ENCODE measurements at regions of chr1 and their contacts with region 1.

Region 1: DNA sequence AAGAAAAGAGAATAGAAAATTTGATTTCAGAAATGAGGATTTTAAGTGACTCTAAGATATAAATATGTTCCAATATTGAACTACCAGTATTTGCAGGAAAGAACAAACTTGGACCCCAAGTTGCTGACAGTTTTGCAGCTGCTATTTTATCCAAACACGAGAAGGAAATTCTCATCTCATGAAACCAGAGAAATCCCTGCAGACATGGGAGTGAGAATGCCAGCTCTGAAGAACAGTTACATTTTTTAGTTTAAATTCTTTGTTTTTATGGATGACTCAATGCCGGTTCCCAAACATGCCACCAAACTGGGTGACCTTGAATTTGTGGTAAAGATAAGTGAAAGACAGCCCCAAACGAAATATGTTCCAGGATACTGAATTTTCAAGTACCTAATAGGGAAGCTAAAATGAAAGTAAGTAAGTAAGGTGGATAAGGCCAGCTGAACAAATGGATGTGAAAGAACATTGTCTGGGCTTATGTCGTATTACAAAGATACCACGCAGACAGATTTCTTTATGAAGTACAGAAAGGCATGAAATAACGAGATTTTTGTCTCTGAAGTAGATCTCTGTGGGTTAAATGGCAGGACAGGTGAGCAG is 19.9 kb downstream of the TLR5 start:
- DNase-seq: no peak
- H3K4me3 Mint-ChIP-seq: peak overlapping the region; percentile 29
- H3K27ac Mint-ChIP-seq: no peak overlapping the region
- H3K4me1 Mint-ChIP-seq: peaks cover 10% of the 10 kb centered on the region
- H3K27me3 Mint-ChIP-seq: no peaks in the 10 kb centered on the region
- CTCF ChIP-seq: no peak

Region 2: GRCh38 chr1:222792744-222793143 is 330.4 kb before region 1 on chr1:
- CTCF ChIA-PET with region 1: no interaction called
- intact Hi-C with region 1: loop called (anchors 2 kb)
- DNase-seq: no peak
- H3K4me3 Mint-ChIP-seq: no peak overlapping the region
- H3K27ac Mint-ChIP-seq: no peak overlapping the region
- H3K4me1 Mint-ChIP-seq: no peaks in the 10 kb centered on the region
- H3K27me3 Mint-ChIP-seq: peaks cover 20% of the 10 kb centered on the region
- CTCF ChIP-seq: peak; percentile 55

Region 3: GRCh38 chr1:223087291-223088255 is 35.5 kb before region 1 on chr1:
- CTCF ChIA-PET with region 1: interaction called, 30 read pairs
- intact Hi-C with region 1: loop called (anchors 2 kb)
- DNase-seq: no peak
- H3K4me3 Mint-ChIP-seq: no peak overlapping the region
- H3K27ac Mint-ChIP-seq: no peak overlapping the region
- H3K4me1 Mint-ChIP-seq: no peaks in the 10 kb centered on the region
- H3K27me3 Mint-ChIP-seq: peaks cover 27% of the 10 kb centered on the region
- CTCF ChIP-seq: no peak

Region 4: DNA sequence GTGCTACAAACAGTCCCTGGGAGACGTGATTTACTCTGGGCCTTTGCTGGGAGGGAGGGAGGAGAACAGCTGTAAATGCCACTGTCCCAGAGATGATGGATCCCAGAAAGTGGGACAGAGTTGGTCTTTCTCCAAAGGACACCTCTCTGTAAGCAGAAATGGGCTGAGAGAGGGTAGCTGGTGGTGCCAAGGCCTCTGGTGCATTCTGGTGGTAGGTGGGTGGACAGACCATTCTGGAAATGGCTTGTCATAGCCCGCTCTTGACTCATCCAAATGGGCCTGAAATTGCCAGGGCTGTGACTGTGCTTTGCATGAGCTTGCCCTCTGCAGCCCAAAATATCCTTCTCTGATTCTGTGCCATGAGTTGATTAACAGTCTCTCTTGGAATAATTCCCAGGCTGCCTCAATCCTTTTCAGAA is 306.2 kb after region 1 on chr1:
- CTCF ChIA-PET with region 1: no interaction called
- intact Hi-C with region 1: no loop called
- DNase-seq: no peak
- H3K4me3 Mint-ChIP-seq: no peak overlapping the region
- H3K27ac Mint-ChIP-seq: no peak overlapping the region
- H3K4me1 Mint-ChIP-seq: peaks cover 10% of the 10 kb centered on the region
- H3K27me3 Mint-ChIP-seq: no peaks in the 10 kb centered on the region
- CTCF ChIP-seq: no peak

Measured in Calu3 (cell line).